BJ (cell line): ENCODE measurements at regions of chr4 and their contacts with region 1.

Region 1: GRCh38 chr4:42519803-42520417 is 122.6 kb downstream of the SHISA3 start:
- DNase-seq: no peak
- H3K4me3 ChIP-seq: no peak overlapping the region
- H3K27me3 ChIP-seq: no peaks in the 10 kb centered on the region
- CTCF ChIP-seq: peak; percentile 59

Region 2: GRCh38 chr4:42282081-42282901 is 237.6 kb before region 1 on chr4:
- CTCF ChIA-PET with region 1: interaction called, 53 read pairs
- POLR2A ChIA-PET with region 1: no interaction called
- DNase-seq: no peak
- H3K4me3 ChIP-seq: no peak overlapping the region
- H3K27me3 ChIP-seq: no peaks in the 10 kb centered on the region
- CTCF ChIP-seq: peak; percentile 68

Region 3: GRCh38 chr4:42371306-42372252 is 148.3 kb before region 1 on chr4:
- CTCF ChIA-PET with region 1: interaction called, 15 read pairs
- POLR2A ChIA-PET with region 1: no interaction called
- DNase-seq: no peak
- H3K4me3 ChIP-seq: no peak overlapping the region
- H3K27me3 ChIP-seq: no peaks in the 10 kb centered on the region
- CTCF ChIP-seq: peak; percentile 34

Region 4: DNA sequence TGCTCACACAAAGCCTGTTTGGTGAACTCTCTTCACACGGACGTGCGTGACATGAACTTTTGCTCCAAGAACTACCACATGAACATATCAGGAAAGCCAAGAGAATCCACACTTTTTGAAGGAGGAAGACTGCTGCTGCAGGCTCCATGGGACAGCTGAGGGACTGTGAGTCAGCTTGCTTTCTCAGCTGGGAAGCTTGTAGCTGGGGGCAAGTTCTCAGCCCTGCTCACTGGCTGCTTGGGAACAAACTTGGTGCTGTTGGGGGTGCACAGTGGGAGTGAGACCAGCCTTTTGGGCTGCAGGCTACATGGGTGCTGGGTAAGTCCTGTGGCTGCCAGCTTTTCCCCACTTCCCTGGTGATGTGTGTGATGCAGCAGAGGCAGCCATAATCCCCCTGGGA is 13.1 kb after region 1 on chr4:
- CTCF ChIA-PET with region 1: interaction called, 15 read pairs
- POLR2A ChIA-PET with region 1: no interaction called
- DNase-seq: no peak
- H3K4me3 ChIP-seq: no peak overlapping the region
- H3K27me3 ChIP-seq: no peaks in the 10 kb centered on the region
- CTCF ChIP-seq: no peak